HEK293T (cell line): ENCODE measurements at regions of chr5 and their contacts with region 1.

Region 1: GRCh38 chr5:58460732-58461286 is 923 bp upstream of the PLK2 start:
- DNase-seq: peak; percentile 79

Region 2: DNA sequence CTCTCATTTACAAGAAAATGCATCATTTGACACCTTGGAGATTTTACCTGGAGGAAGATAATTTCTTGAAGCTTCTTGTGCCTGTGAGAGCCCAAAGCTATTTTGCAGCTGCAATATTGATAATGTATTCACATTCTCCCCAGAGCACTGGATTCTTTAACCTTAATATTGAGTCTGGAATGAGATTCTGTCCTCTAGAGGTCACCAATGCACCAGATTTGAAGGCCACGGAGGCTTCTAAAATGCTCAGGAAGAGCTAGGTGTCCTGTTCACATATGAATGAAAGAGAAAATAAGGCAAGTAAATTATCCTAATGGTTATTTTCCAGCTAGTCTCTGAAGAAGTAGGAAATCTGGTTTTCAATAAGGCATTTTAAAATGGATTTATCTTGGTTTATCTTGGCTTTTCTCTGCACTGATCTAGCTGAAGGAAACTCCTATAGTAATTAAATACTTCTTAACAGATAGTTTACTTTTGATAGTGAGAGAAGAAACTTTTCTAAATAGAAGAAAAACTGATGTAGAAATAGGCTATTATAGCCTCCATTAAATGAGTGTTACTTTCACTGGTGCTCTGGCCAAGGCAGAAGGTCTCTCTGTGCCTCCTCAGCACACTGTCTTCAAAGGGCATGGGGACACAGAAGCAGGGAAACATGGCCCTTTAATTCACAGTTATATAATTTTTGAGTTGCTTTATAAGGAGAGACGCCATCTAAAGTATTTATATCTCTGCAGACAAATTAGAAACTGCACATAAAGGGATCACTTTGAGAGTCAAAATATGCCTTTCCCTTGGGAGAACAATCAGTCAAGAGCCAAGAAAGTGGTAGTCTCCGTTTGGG is 681.2 kb before region 1 on chr5:
- CTCF ChIA-PET with region 1: interaction called, 40 read pairs
- POLR2A ChIA-PET with region 1: interaction called, 7 read pairs
- DNase-seq: peak; percentile 32

Region 3: GRCh38 chr5:57887851-57888621 is 572.8 kb before region 1 on chr5:
- CTCF ChIA-PET with region 1: interaction called, 10 read pairs
- POLR2A ChIA-PET with region 1: interaction called, 4 read pairs
- DNase-seq: peak; percentile 42

Region 4: GRCh38 chr5:58437661-58438060 is 23.1 kb before region 1 on chr5:
- CTCF ChIA-PET with region 1: no interaction called
- POLR2A ChIA-PET with region 1: no interaction called
- DNase-seq: no peak